ENCODE measurements at regions of chr19 and their contacts with region 1.

Region 1: DNA sequence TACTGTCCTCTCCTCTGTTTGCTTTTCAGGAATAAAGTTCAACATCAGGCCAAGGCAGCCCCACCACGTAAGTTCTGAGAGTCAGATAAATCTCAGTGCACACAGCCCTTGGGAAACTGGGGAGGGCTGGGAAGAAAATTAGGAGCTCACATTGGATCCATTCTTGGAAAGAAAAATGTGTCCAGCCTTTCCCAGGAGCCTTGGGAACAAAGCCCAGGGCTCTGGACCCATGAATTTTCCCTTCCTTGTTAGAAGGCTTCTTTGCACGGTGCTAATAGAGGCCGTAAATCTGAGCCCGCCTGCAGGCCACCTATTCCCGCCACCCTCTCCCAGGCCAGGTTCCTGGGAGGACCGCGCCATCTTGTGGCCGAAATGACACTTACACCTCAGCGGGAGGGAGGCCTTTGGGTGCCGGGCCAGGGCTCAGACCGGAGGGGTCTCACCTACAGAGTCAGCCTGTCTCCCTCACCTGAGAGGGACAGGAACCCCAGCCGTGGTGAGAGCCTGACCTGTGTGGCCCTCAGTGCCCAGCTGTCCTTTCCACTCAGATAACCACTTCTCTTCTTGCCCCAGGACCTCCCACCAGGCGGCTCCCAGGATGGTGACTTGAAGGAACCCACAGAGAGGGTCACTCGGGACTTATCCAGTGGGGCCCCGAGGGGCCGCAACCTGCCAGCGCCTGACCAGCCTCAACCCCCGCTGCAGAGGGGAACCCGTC is 25.1 kb upstream of the KCTD15 start:
- DNase-seq: peak; percentile 63 to 74
- H3K4me3 ChIP-seq: no peak overlapping the region
- H3K27ac ChIP-seq: no peak overlapping the region
- H3K4me1 ChIP-seq: no peaks in the 10 kb centered on the region
- H3K27me3 ChIP-seq: no peaks in the 10 kb centered on the region
- CTCF ChIP-seq: peak; percentile 29 to 92 (median 84)
- POLR2A ChIP-seq: no peak

Region 2: GRCh38 chr19:33241530-33242101 is 529.9 kb before region 1 on chr19:
- intact Hi-C with region 1: loop called (anchors 5 kb)
- DNase-seq: peak; percentile 24 to 36
- H3K4me3 ChIP-seq: no peak overlapping the region
- H3K27ac ChIP-seq: no peak overlapping the region
- H3K4me1 ChIP-seq: peaks cover 0 to 7% of the 10 kb centered on the region in 2 donors
- H3K27me3 ChIP-seq: no peaks in the 10 kb centered on the region
- CTCF ChIP-seq: peak; percentile 30 to 91 (median 84)
- POLR2A ChIP-seq: no peak

Region 3: DNA sequence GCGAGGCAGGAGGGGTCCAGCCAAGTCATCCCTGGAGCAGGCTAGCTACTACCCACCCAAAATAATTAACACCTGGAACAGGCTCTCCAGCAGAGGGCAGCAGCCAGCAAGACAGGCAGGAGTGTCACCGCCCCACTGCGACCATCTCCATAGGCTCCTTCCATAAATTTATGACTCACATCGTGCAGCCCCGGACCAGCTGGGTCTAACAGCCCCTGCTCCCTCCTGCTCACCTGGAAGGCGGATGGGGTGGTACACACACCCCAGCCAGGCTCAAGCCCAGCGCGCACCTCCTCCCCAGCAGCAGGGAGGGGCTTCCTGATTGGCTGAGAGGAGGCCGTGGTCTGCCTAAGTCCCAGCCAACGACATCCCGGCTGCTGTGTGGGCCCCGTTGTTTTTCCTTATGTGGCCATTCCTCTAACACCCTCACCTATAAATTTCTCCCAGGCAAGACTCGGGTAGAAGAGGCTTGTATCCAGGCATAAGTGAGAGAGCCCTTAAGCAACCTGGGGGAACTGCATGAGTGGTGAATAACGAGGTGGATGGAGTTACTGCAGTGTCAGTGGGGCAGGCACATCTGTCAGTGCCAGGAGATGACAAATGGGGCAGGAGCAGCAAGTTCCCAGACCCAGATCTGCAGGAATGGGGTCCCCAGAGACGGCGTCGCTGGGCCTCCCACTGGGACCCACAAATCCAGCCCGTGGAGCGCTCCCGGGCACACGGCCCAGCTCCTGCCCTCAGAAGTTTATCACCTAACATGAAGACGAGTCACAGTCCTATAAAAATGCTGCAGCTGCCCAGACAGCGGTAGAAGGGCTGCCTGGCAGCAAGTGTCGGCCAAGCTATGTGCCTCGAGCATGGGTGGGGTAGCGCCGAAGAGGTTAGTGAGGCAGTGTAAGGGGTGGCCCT is 355.0 kb before region 1 on chr19:
- intact Hi-C with region 1: loop called (anchors 5 kb)
- DNase-seq: peak; percentile 61 to 67
- H3K4me3 ChIP-seq: no peak overlapping the region
- H3K27ac ChIP-seq: no peak overlapping the region
- H3K4me1 ChIP-seq: no peaks in the 10 kb centered on the region
- H3K27me3 ChIP-seq: no peaks in the 10 kb centered on the region
- CTCF ChIP-seq: peak; percentile 21 to 67 (median 40)
- POLR2A ChIP-seq: no peak

Region 4: DNA sequence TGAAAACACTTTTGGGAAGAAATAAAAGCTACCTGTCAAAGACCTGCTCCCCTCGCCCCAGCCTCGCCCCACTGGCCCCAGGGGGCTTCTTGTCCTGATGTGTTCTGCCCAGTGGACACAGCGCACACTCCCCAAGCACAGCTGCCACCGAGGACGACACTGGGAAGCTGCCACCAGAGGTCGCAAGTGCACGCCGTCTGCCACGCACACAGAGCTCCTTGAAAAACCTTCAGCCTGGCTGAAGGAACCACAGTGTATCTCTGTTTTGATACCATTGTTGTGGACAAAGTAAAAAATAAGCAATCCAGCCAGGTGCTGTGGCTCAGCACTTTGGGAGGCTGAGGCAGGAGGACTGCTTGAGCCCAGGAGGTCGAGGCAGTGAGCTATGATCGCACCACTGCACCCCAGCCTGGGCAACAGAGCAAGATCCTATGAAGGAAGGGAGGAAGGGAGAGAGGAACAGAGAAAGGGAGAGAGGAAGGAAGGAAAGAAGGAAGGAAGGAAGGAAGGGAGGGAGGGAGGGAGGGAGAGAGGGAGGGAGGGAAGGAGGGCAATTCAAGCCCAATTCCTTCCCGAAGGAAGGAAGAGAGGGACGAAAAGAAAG is 340.8 kb before region 1 on chr19:
- intact Hi-C with region 1: loop called (anchors 2 kb)
- DNase-seq: peak; percentile 65 to 69
- H3K4me3 ChIP-seq: no peak overlapping the region
- H3K27ac ChIP-seq: no peak overlapping the region
- H3K4me1 ChIP-seq: peaks cover 4 to 11% of the 10 kb centered on the region in 2 donors
- H3K27me3 ChIP-seq: no peaks in the 10 kb centered on the region
- CTCF ChIP-seq: peak; percentile 26 to 79 (median 53)
- POLR2A ChIP-seq: no peak

Region 5: DNA sequence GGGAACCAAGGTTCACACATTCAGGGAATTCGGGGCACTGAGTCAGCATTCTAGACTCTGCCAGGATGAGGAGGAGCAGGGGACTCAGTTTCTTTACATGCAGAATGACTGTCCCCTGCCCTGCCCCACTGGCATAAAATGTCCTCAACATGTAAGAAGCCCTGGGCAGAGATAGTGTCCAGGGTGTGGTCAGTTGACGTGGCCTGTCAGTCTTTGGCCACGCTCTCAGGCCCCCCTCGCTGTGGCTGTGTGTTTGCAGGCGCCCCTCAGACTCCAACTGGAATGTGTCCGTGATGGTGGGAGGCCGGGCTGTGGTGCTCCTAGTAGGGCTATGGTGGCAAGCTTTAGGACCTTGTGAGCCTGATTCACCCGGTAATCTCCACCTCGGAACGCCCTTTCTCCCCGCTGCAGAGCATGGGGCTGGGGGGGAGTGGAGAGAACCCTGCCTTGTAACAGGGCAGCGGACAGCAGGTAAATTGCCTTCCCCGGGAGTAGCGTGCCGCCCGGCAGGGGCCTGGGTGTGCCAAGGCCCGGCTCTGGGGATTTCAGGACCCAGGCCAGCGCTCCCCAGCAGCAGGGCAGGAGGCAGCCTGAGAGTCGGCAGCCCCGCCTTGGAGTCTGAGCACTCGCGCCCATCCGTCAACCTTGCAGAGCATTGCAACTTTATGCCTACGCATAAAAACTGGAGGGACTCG is 87.6 kb before region 1 on chr19:
- intact Hi-C with region 1: no loop called
- DNase-seq: peak; percentile 62 to 75
- H3K4me3 ChIP-seq: no peak overlapping the region
- H3K27ac ChIP-seq: no peak overlapping the region
- H3K4me1 ChIP-seq: peaks cover 0 to 17% of the 10 kb centered on the region in 2 donors
- H3K27me3 ChIP-seq: peaks cover 5% of the 10 kb centered on the region
- CTCF ChIP-seq: no peak
- POLR2A ChIP-seq: no peak

Region 6: DNA sequence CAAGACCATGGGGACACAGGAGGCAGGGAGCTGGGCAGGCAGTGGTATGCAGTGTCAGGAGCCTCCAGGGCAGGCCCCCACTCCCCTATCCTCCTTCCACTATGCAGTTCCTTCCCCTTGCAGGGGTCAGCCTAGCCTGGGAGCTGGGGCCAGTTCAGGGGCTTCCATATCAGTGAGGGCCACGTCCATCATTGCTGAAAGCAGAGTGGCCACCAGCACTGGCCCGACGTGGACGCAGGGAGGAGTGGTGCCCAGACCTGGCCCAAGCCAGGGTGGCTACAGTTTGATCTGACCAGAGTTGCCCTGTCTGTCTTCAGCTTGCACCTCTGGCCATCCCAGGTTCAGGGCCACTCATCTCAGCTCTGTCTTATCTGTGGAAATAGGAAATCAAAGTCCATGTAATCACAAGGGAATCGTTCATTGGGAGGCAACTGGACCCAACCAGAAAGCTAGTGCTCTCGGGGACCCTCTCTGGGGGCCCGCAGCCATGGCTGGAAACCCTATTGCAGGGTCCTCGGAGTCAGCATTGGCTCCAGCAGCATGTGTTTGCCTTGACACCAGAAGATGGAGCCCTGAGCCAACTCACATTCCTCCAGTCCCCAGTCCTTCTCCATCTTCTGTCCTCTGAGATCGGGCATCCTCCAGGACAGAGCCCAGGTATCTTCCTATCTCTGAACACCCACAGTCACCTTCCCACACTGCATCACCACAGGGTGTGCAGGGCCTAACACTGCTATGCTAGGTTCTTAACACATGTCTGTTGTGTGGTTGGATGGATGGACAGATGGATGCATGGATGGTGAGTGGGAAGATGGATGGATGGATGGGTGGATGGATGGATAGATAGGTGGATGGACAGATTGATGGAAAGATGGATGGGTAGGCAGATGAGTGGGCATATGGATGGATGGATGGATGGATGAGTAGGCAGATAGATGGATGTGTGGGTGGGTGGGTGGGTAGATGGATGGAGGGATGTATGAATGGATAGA is 50.6 kb before region 1 on chr19:
- intact Hi-C with region 1: no loop called
- DNase-seq: no peak
- H3K4me3 ChIP-seq: no peak overlapping the region
- H3K27ac ChIP-seq: no peak overlapping the region
- H3K4me1 ChIP-seq: no peaks in the 10 kb centered on the region
- H3K27me3 ChIP-seq: no peaks in the 10 kb centered on the region
- CTCF ChIP-seq: no peak
- POLR2A ChIP-seq: no peak

Region 7: DNA sequence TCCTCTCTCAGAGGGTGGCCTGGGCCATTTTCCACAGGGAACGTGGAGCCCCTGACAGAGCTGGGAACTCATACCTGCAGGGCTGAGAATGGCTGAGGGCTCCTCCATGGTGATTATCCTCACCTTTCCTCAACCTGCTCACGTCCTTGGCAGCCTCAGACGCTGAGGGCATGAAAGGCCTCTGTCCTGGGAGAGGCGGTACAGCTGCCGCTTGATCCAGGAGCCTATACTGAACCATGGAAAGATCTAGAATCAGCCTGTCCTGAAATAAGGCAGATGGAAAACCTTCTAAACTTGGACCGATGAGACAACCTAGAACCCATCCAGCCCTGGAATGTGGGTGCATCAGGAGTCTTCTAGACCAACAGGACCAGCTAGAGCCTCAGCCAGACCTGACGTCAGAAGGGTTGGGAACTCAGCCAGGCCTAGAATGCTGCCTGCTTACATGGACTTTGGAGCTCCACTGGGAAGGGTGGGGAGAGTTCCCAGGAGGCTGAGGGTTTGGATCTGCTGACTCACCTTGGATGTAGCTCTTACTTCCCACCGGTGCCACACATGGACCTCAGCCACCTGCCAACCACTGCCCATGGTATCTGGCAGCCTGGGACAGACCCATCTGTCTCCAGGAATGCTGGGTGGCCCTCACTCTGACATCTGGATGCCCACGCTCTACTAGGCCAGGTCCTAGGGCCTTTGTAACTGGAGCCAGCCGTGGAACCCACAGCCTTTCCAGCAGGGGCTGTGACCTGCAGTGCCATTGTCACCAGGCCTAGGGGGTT is 32.7 kb after region 1 on chr19:
- intact Hi-C with region 1: no loop called
- DNase-seq: peak; percentile 80 to 81
- H3K4me3 ChIP-seq: no peak overlapping the region
- H3K27ac ChIP-seq: peak overlapping the region; percentile 18 to 65 (median 62)
- H3K4me1 ChIP-seq: peaks cover 13 to 24% of the 10 kb centered on the region in 2 donors
- H3K27me3 ChIP-seq: no peaks in the 10 kb centered on the region
- CTCF ChIP-seq: no peak
- POLR2A ChIP-seq: no peak